Gastrocnemius medialis (tissue), 4 donors: ENCODE measurements at regions of chr9 and their contacts with region 1.

Region 1: DNA sequence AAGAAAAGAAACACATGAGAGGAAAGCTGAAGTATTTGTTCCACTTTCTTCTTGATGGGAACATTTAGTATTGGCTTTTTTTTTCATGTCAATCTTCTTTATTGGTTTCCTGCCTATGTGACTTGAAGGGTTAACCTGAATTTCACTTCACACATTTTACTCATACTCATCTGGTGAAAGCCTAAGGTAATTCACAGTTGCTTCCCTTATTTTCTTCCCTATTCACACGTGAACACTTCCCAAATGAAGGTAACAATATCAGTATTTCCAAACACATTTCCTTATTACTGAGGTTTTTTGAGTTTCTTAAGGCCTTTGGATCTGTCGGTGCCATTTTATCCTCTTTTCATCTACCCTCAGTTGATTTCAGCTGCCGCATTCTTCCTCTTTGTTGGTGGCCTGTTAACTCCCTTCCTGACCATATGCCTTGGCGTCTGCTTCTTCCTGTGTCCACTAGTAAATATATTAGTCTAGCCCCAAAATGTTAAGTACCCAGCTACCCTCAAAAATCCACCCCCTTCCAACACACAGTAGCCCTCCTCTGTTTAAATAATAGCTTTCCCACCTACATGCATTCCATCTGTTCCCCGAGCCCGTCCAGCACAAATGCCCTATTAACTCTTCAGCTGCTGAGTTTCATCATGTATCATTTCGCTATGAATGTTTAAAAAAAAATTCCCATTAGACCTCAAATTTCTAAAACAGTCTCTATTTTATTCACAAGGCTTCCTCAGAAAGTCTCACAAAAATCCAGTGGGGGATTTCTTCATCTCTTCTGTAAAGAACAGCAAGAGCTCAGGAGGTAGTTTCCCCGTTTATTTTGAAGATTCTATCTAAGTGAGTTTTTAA is 97.3 kb downstream of the USP20 start:
- DNase-seq: no peak
- ATAC-seq: no peak
- H3K4me3 ChIP-seq: no peak overlapping the region
- H3K27ac ChIP-seq: peak overlapping the region; percentile 24 to 48 (median 34)
- H3K4me1 ChIP-seq: peaks cover 30 to 40% of the 10 kb centered on the region in 2 donors
- H3K27me3 ChIP-seq: no peaks in the 10 kb centered on the region
- CTCF ChIP-seq: no peak
- POLR2A ChIP-seq: no peak

Region 2: GRCh38 chr9:129900263-129901027 is 32.1 kb before region 1 on chr9:
- in situ Hi-C with region 1: no loop called
- intact Hi-C with region 1: no loop called
- DNase-seq: no peak
- ATAC-seq: no peak
- H3K4me3 ChIP-seq: no peak overlapping the region
- H3K27ac ChIP-seq: no peak overlapping the region
- H3K4me1 ChIP-seq: no peaks in the 10 kb centered on the region
- H3K27me3 ChIP-seq: no peaks in the 10 kb centered on the region
- CTCF ChIP-seq: no peak
- POLR2A ChIP-seq: no peak

Region 3: GRCh38 chr9:129988607-129989361 is 56.3 kb after region 1 on chr9:
- in situ Hi-C with region 1: no loop called
- intact Hi-C with region 1: loop called (anchors 10 kb)
- DNase-seq: no peak
- ATAC-seq: no peak
- H3K4me3 ChIP-seq: no peak overlapping the region
- H3K27ac ChIP-seq: peak overlapping the region in 1 of 4 donors; percentile 80
- H3K4me1 ChIP-seq: peaks cover 6 to 17% of the 10 kb centered on the region in 2 donors
- H3K27me3 ChIP-seq: no peaks in the 10 kb centered on the region
- CTCF ChIP-seq: no peak
- POLR2A ChIP-seq: no peak

Region 4: DNA sequence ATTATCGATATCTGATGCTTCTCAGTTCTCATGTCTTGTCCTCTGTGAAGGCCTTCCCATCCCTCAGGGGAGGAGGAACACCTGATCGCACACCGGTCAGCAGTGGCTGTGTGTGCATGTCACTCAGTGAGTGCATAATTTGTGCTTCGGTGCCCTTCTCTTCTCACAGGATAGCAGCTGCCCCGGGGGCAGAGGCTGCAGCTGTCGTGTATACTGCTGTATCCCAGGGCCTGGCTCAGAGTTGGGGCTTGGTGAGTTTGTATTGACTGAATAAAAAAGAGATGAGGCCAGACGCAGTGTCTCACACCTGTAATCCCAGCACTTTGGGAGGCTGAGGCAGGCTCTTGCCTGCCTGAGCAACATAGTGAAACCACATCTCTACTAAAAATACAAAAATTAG is 189.9 kb after region 1 on chr9:
- in situ Hi-C with region 1: no loop called
- intact Hi-C with region 1: no loop called
- DNase-seq: no peak
- ATAC-seq: no peak
- H3K4me3 ChIP-seq: no peak overlapping the region
- H3K27ac ChIP-seq: no peak overlapping the region
- H3K4me1 ChIP-seq: peaks cover 8 to 21% of the 10 kb centered on the region in 2 donors
- H3K27me3 ChIP-seq: no peaks in the 10 kb centered on the region
- CTCF ChIP-seq: no peak
- POLR2A ChIP-seq: no peak

Region 5: GRCh38 chr9:130138171-130138653 is 205.7 kb after region 1 on chr9:
- in situ Hi-C with region 1: no loop called
- intact Hi-C with region 1: no loop called
- DNase-seq: no peak
- ATAC-seq: peak in 1 of 2 donors; percentile 26
- H3K4me3 ChIP-seq: no peak overlapping the region
- H3K27ac ChIP-seq: no peak overlapping the region
- H3K4me1 ChIP-seq: peaks cover 0 to 17% of the 10 kb centered on the region in 2 donors
- H3K27me3 ChIP-seq: no peaks in the 10 kb centered on the region
- CTCF ChIP-seq: no peak
- POLR2A ChIP-seq: no peak